ENCODE measurements at regions of chr20 and their contacts with region 1.

Region 1: DNA sequence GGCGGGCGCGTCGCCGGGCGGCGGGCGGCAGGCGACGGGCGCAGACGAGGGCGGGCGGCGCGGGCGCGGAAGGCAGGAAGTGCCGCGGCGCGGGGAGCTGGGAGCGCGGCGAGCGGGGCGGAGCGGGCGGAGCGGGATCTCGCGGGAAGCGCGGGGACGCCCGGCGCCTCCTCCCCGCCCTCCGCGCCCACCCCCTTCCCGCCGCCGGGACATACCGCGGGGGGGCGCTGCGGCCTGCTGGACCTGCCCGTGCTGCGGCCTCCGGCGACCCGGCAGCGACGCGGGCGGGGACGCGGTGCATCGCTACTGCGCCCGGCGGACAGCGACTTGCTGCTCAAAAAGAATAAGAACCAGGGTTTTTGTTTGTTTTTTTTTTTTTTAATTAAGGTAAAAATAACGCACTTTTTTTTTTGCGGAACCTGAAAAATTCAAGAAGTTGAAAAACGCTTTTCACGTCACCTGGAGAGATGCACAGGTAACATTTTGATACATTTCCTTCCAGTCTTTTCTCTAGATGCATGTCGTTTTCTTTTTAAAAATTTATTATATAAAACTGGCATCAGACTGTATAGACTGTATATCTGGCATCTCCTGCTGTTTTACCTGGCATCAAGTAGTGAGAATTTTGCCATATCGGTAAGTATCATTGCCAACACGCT is at the start of gene CENPB:
- DNase-seq: peak; percentile 90
- H3K4me3 ChIP-seq: peak within 1 kb of the TSS; percentile 71
- H3K27ac ChIP-seq: no peak within 1 kb of the TSS
- H3K4me1 ChIP-seq: peaks cover 28% of the 10 kb centered on the region
- CTCF ChIP-seq: peak; percentile 80
- total RNA-seq, gene CENPB: 32.5 and 39.1 TPM in 2 replicates

Region 2: GRCh38 chr20:3420211-3420707 is 366.5 kb before region 1 on chr20:
- CTCF ChIA-PET with region 1: no interaction called
- POLR2A ChIA-PET with region 1: no interaction called
- intact Hi-C with region 1: no loop called
- DNase-seq: no peak
- H3K4me3 ChIP-seq: no peak overlapping the region
- H3K27ac ChIP-seq: no peak overlapping the region
- H3K4me1 ChIP-seq: no peaks in the 10 kb centered on the region
- CTCF ChIP-seq: no peak

Region 3: GRCh38 chr20:3727401-3728021 is 59.3 kb before region 1 on chr20:
- CTCF ChIA-PET with region 1: no interaction called
- POLR2A ChIA-PET with region 1: no interaction called
- intact Hi-C with region 1: no loop called
- DNase-seq: no peak
- H3K4me3 ChIP-seq: no peak overlapping the region
- H3K27ac ChIP-seq: no peak overlapping the region
- H3K4me1 ChIP-seq: no peaks in the 10 kb centered on the region
- CTCF ChIP-seq: no peak

Region 4: GRCh38 chr20:3820048-3820900 is 33.5 kb after region 1 on chr20 and contains the start of gene AP5S1:
- CTCF ChIA-PET with region 1: interaction called, 4 read pairs
- POLR2A ChIA-PET with region 1: interaction called, 16 read pairs
- intact Hi-C with region 1: loop called (anchors 1 kb)
- DNase-seq: peak; percentile 97
- H3K4me3 ChIP-seq: peak within 1 kb of the TSS; percentile 91
- H3K27ac ChIP-seq: peak within 1 kb of the TSS; percentile 70
- H3K4me1 ChIP-seq: peaks cover 37% of the 10 kb centered on the region
- CTCF ChIP-seq: peak; percentile 98
- total RNA-seq, gene AP5S1: 6.2 and 9.8 TPM in 2 replicates

Region 5: DNA sequence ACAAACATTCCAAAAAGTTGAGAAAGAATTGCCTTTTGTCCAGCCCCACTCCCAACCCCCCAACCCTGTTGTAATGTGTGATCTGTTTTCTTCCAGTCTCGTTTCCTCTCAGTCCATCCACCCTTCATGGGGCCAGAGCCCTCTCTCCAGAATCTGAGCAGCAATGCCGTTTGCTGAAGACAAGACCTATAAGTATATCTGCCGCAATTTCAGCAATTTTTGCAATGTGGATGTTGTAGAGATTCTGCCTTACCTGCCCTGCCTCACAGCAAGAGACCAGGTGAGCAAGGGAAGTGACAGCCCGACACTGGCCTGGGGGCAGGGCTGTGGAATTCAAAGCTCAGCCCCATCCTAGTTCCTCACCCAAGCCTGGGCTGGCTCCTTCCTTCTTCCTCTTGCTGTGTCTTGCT is 67.7 kb after region 1 on chr20:
- CTCF ChIA-PET with region 1: interaction called, 3 read pairs
- POLR2A ChIA-PET with region 1: interaction called, 3 read pairs
- intact Hi-C with region 1: loop called (anchors 1 kb)
- DNase-seq: no peak
- H3K4me3 ChIP-seq: no peak overlapping the region
- H3K27ac ChIP-seq: no peak overlapping the region
- H3K4me1 ChIP-seq: no peaks in the 10 kb centered on the region
- CTCF ChIP-seq: no peak

Region 6: GRCh38 chr20:3888622-3889488 is 102.1 kb after region 1 on chr20 and contains the start of gene PANK2:
- CTCF ChIA-PET with region 1: no interaction called
- POLR2A ChIA-PET with region 1: no interaction called
- intact Hi-C with region 1: loop called (anchors 2 kb)
- DNase-seq: peak; percentile 98
- H3K4me3 ChIP-seq: peak within 1 kb of the TSS; percentile 95
- H3K27ac ChIP-seq: peak within 1 kb of the TSS; percentile 81
- H3K4me1 ChIP-seq: peaks cover 32% of the 10 kb centered on the region
- CTCF ChIP-seq: peak; percentile 47
- total RNA-seq, gene PANK2: 40.9 and 46.1 TPM in 2 replicates

Region 7: DNA sequence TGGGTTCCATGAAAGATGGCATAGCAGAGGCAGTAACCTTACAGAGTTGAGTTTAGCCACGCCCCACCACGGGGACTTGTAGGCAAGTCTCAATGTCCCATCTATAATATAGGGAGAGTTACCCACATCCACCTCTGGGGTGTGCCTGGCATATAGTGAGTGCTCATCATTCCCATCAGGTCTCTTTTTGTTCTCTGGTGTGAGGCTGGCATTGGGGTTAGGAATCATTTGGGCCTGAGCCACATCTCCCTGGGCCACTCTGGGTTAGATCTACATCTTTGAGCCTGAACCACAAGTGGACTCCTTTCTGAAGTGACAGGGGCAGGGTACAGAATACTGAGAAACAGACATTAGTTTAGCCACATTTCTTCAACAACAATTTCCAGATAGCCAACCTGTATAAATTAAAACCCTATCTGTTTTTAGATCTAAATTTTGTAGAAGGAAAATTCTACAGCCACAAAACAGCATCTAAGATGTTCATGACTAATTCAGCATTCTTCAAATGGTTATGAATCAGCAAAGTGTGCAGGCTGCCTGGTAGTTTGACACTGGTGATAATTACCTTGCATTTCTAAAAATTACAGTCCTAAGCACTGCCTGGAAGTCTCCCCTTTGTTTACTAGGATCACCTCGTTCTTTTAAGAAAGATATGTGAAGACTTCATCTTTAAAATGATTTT is 208.4 kb after region 1 on chr20:
- CTCF ChIA-PET with region 1: no interaction called
- POLR2A ChIA-PET with region 1: no interaction called
- intact Hi-C with region 1: no loop called
- DNase-seq: no peak
- H3K4me3 ChIP-seq: no peak overlapping the region
- H3K27ac ChIP-seq: no peak overlapping the region
- H3K4me1 ChIP-seq: no peaks in the 10 kb centered on the region
- CTCF ChIP-seq: no peak